GM12878 (cell line): ENCODE measurements at regions of chr1 and their contacts with region 1.

Region 1: GRCh38 chr1:53393325-53393792 is 65.5 kb upstream of the LRP8 start:
- DNase-seq: no peak
- ATAC-seq: peak; percentile 93
- H3K4me3 ChIP-seq: no peak overlapping the region
- H3K27ac ChIP-seq: no peak overlapping the region
- H3K4me1 ChIP-seq: peaks cover 6% of the 10 kb centered on the region
- H3K27me3 ChIP-seq: no peaks in the 10 kb centered on the region; a peak in 2 of 4 replicates
- CTCF ChIP-seq: peak; percentile 87 to 88 (median 87)
- EP300 ChIP-seq: no peak
- POLR2A ChIP-seq: no peak
- RAD21 ChIP-seq: peak; percentile 92

Region 2: DNA sequence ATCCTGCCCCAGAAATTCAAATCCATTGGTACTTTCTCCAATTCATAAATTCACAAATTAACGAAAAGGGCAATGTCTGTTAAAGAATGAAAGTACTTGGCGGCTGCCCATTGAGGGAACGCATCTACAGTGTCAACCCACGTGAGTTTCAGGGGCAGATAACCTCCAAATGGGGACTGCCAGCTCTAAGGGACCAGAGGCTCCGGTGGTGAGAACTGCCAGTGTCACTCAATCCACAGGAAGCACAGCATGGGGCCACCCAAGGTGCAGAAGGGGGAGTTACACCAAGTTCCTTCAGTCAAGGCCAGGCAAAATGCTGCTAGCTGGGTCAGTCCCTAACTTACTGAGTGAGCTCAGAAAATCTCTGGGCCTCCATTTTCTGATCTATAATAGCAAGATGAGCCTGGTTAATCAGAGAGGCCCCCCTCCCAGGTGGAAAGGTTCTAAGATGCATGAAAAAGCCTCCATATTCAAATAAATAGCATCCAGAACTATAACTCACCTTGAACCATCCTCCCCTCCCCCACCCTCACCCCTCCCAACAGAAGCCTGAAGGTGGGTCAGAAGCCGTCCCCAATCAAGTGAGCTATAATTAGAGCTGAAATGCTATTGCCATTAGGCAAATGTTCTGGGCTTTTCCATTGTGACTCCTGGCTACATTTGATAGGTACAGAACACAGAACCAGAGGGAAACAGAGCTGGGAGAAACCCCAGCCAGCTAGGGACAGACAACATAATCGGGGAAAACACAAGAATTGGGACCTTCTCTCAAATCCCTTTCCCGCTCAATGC is 107.2 kb before region 1 on chr1:
- CTCF ChIA-PET with region 1: interaction called, 185 read pairs
- POLR2A ChIA-PET with region 1: interaction called, 3 read pairs
- RAD21 ChIA-PET with region 1: interaction called, 105 read pairs
- SMC1A ChIA-PET with region 1: interaction called, 107 read pairs
- in situ Hi-C with region 1: no loop called
- intact Hi-C with region 1: no loop called
- DNase-seq: no peak
- ATAC-seq: peak; percentile 75
- H3K4me3 ChIP-seq: no peak overlapping the region
- H3K27ac ChIP-seq: no peak overlapping the region
- H3K4me1 ChIP-seq: no peaks in the 10 kb centered on the region
- H3K27me3 ChIP-seq: no peaks in the 10 kb centered on the region
- CTCF ChIP-seq: no peak
- EP300 ChIP-seq: no peak
- POLR2A ChIP-seq: no peak
- RAD21 ChIP-seq: no peak

Region 3: DNA sequence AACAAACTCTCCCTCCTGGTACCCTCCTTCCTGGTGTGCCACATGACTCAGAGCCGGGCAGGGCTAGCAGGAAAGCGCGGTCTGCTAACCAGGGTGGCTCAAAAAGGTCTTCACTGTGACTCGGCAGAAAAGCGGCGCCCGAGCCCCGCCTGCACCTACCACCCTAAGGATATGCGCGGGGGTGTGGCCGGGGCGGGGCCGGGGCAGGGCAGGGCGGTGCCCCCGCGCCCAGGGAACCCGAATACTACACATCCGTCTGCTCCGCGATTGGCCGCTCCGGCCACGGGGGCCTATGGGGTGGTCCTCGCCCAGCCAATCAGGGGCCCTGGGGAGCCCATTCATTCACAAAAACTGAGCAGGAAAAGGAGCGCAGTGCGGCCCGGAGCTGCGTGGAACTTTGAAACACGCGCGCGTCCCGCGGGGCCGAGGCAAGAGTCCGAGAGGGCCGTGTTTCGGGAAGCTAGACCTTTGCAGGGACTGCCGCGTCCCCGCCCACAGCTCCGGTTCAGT is 67.2 kb before region 1 on chr1:
- CTCF ChIA-PET with region 1: interaction called, 8 read pairs
- POLR2A ChIA-PET with region 1: interaction called, 3 read pairs
- RAD21 ChIA-PET with region 1: interaction called, 6 read pairs
- SMC1A ChIA-PET with region 1: interaction called, 9 read pairs
- in situ Hi-C with region 1: no loop called
- intact Hi-C with region 1: loop called (anchors 5 kb)
- DNase-seq: peak; percentile 73
- ATAC-seq: peak; percentile 95
- H3K4me3 ChIP-seq: peak overlapping the region; percentile 100
- H3K27ac ChIP-seq: peak overlapping the region; percentile 79
- H3K4me1 ChIP-seq: peaks cover 13% of the 10 kb centered on the region
- H3K27me3 ChIP-seq: no peaks in the 10 kb centered on the region
- CTCF ChIP-seq: no peak; a peak in 1 of 6 replicates
- EP300 ChIP-seq: no peak
- POLR2A ChIP-seq: peak; percentile 83
- RAD21 ChIP-seq: no peak

Region 4: DNA sequence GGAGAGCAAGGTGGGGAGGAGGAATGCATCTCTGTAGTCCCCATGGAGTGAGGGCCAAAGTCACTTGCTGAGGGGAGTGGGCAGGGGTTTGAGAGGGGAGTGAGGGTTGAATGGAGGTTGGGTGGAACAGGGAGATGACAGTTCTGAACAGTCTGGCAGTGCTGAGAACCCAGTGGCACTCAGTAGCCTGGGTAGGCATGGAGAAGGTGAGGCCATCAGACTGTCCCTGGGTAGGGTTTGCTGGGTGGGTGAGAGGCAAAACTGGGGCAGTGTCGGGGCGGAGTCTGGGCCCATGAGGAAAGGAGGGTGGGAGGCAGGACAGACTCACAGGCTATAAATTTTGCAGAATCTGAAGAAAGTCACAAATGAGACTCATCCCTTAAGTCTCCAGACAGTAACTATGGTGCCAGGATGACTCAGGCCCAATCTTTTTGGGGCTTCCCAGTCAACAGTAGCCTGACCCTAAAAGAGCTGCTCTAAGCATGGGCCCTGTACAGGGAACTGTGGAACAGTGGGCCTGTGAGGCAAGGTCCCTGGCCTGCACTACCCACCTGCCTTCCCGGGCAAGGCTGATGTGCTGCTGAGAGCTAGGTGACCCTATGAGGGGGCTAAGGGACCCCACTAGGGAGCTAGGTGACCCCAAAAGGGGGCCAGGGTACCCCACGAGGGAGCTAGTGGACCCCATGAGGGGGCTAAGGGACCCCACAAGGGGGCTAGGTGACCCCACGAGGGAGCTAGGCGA is 14.8 kb after region 1 on chr1:
- CTCF ChIA-PET with region 1: interaction called, 46 read pairs
- POLR2A ChIA-PET with region 1: interaction called, 13 read pairs
- RAD21 ChIA-PET with region 1: interaction called, 17 read pairs
- SMC1A ChIA-PET with region 1: interaction called, 25 read pairs
- in situ Hi-C with region 1: no loop called
- intact Hi-C with region 1: no loop called
- DNase-seq: no peak
- ATAC-seq: peak; percentile 42
- H3K4me3 ChIP-seq: no peak overlapping the region
- H3K27ac ChIP-seq: no peak overlapping the region
- H3K4me1 ChIP-seq: peaks cover 29% of the 10 kb centered on the region
- H3K27me3 ChIP-seq: no peaks in the 10 kb centered on the region
- CTCF ChIP-seq: no peak
- EP300 ChIP-seq: no peak
- POLR2A ChIP-seq: no peak
- RAD21 ChIP-seq: no peak

Region 5: DNA sequence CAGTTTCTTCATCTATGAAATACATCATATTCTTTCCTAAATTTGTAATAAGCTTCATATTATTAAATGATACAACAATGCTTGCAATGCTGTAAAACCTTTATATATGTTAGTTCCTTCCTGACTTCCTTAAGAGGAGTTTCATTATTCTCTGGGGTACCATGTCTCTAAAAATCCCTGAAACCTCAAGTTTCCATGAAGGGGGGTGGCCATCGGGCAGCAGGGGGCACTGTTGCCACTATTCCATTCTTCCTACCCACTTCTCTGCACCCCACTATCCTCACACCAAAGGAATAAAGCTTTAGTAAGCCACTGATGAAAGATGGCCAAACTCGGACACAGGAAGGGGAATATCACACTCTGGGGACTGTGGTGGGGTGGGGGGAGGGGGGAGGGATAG is 56.9 kb after region 1 on chr1:
- CTCF ChIA-PET with region 1: interaction called, 3 read pairs
- POLR2A ChIA-PET with region 1: no interaction called
- RAD21 ChIA-PET with region 1: interaction called, 3 read pairs
- SMC1A ChIA-PET with region 1: interaction called, 4 read pairs
- in situ Hi-C with region 1: no loop called
- intact Hi-C with region 1: loop called (anchors 2 kb)
- DNase-seq: no peak
- ATAC-seq: peak; percentile 25; the same call in 1 of the 3 replicates
- H3K4me3 ChIP-seq: no peak overlapping the region
- H3K27ac ChIP-seq: no peak overlapping the region
- H3K4me1 ChIP-seq: no peaks in the 10 kb centered on the region
- H3K27me3 ChIP-seq: no peaks in the 10 kb centered on the region
- CTCF ChIP-seq: peak; percentile 20 to 37 (median 27); a peak in 4 of 6 replicates
- EP300 ChIP-seq: no peak
- POLR2A ChIP-seq: no peak
- RAD21 ChIP-seq: no peak

Region 6: DNA sequence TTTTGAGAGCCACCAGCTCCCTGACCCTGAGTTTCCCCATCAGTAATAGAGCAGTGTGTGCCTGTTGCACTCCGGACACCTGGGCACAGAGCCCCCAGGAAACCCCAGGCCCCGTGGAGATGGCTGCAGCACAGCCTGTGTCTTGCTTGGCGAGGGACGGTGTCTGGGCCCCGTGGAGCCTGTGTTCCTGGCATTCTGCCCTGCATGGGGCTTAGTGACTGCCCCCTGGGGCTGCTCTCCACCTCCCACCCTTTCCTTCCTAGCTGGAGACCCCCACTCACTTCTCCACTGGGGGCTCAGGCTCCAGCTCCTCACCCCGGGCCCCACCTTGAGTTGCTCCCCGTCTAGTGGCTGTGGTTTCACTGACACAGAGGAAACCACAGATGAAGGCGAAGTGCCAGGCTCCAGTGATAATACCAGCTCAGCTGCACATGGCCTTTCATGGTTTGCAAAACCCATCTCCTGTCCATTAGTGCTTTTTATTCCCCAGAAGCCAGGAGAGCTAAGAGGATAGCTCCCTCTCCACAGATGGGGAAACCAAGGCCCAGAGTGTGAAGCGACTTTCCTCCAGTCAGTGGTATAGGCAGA is 105.3 kb after region 1 on chr1:
- CTCF ChIA-PET with region 1: no interaction called
- POLR2A ChIA-PET with region 1: no interaction called
- RAD21 ChIA-PET with region 1: no interaction called
- SMC1A ChIA-PET with region 1: no interaction called
- in situ Hi-C with region 1: no loop called
- intact Hi-C with region 1: no loop called
- DNase-seq: no peak
- ATAC-seq: no peak
- H3K4me3 ChIP-seq: no peak overlapping the region
- H3K27ac ChIP-seq: no peak overlapping the region
- H3K4me1 ChIP-seq: no peaks in the 10 kb centered on the region
- H3K27me3 ChIP-seq: no peaks in the 10 kb centered on the region; a peak in 1 of 4 replicates
- CTCF ChIP-seq: no peak
- EP300 ChIP-seq: no peak
- POLR2A ChIP-seq: no peak
- RAD21 ChIP-seq: no peak